Lower leg skin (tissue), 4 donors: ENCODE measurements at regions of chr2 and their contacts with region 1.

Region 1: DNA sequence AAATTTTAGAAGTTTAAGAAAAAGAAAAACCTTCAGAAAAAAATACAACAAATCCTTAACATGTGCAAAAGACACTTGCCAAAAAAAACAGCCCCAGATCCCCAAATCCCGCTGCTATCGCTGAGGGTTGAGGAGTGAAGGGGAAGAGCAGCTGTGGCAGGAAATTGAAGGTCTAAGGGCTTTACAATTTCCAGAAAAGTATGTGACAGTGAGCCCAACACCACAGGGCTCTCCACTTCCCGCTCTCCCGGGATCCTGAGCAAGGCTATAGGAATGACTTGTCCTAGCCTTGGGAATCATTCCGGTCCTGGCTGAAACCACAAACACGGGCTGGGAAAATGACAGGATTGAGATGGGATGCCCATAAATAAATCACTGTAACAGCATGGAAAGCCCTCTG is 191.4 kb downstream of the TMEM163 start:
- DNase-seq: no peak
- H3K4me3 ChIP-seq: no peak overlapping the region
- CTCF ChIP-seq: no peak
- POLR2A ChIP-seq: no peak

Region 2: GRCh38 chr2:135055182-135055786 is 527.9 kb after region 1 on chr2:
- intact Hi-C with region 1: loop called (anchors 5 kb)
- DNase-seq: no peak
- H3K4me3 ChIP-seq: no peak overlapping the region
- CTCF ChIP-seq: no peak
- POLR2A ChIP-seq: no peak